ENCODE measurements at regions of chr10 and their contacts with region 1.

Region 1: DNA sequence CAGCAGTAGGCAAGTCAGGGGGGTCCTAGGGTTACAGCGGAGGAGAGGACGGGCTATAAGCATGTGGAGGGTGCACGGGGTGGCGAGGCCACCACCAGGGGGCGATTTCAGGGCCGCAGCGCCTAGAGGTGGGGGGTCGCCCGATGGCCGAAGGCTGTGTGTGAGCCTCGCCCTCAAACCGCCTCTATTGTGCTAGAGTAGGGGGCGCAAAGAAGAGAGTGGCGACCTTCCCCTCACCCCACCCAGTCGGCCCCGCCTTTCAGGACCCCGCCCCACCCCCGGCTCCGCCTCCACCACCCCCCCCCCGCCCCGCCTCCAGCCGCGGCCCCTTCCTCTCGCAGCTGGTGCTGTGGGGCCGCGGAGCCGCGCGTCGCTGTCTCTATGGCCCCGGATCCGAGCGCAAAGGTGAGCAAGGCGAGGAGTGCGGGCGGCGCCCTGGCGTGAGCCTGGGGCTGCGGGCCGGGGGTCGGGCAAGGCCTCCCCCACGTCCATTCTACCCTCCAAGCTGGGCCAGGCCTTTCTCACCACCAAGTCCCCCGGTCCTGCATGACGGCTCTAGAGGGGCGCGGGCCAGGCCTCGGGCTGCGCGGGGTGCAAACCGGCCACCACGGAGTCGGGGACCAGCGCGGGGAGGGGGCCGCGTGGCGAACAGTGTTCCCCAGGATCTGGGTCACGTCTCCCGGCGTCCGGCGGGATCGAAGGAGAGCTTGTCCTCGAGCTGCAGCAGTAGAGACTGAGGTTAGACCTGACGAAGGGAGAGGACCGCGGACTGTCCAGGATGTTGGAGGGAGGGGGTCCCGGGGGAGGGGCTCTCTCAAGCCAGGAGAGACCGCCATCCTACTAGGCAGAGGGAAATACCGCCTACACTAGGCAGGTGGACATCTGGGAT is at the start of gene SEMA4G:
- DNase-seq: peak; percentile 69 to 80
- H3K4me3 ChIP-seq: peak within 1 kb of the TSS; percentile 98
- H3K4me3 Mint-ChIP-seq: peak within 1 kb of the TSS; percentile 90
- H3K27ac Mint-ChIP-seq: peak within 1 kb of the TSS; percentile 86
- H3K4me1 ChIP-seq: peaks cover 33% of the 10 kb centered on the region
- H3K4me1 Mint-ChIP-seq: peaks cover 50% of the 10 kb centered on the region
- H3K27me3 ChIP-seq: no peaks in the 10 kb centered on the region
- H3K27me3 Mint-ChIP-seq: no peaks in the 10 kb centered on the region
- CTCF ChIP-seq: peak; percentile 80 to 83
- total RNA-seq, gene SEMA4G: 67.3 and 81.2 TPM in 2 replicates

Region 2: DNA sequence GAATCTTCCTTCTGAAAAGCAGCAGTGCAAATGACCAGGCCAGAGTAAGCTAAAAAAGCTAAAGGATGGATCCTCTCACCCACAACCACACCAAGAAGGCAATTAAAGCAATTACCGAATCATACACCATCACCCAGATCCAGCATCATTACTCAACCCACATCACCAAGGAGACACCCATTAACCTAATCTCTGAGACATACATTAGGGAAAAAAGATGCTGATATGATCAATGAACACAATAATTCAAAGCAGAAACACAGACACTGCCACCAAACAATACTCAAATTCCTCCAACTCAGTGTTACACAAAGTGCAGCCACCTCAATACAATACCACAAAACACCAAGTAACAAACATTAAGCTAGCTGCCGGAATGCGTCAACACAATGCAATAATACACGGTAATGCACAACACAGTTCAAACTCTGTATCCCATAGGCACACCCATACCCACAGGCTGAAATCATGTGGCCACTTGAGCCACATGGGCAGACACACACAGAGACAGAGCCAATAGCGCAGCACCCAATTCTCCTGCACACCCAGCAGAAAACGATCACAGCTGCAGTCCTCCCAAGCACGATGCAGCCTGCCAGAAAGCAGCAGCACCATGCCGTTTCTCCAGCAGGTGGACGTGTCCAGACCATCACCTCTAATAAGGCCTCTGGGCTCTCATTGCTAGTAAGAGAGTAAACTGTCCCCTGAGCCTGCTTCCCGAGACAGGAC is 202.6 kb before region 1 on chr10:
- CTCF ChIA-PET with region 1: no interaction called
- POLR2A ChIA-PET with region 1: no interaction called
- intact Hi-C with region 1: no loop called
- DNase-seq: peak in 1 of 2 experiments; percentile 53
- H3K4me3 ChIP-seq: no peak overlapping the region
- H3K4me3 Mint-ChIP-seq: no peak overlapping the region
- H3K27ac Mint-ChIP-seq: no peak overlapping the region
- H3K4me1 ChIP-seq: no peaks in the 10 kb centered on the region
- H3K4me1 Mint-ChIP-seq: no peaks in the 10 kb centered on the region
- H3K27me3 ChIP-seq: no peaks in the 10 kb centered on the region
- H3K27me3 Mint-ChIP-seq: peaks cover 23% of the 10 kb centered on the region
- CTCF ChIP-seq: peak; percentile 8 to 71

Region 3: DNA sequence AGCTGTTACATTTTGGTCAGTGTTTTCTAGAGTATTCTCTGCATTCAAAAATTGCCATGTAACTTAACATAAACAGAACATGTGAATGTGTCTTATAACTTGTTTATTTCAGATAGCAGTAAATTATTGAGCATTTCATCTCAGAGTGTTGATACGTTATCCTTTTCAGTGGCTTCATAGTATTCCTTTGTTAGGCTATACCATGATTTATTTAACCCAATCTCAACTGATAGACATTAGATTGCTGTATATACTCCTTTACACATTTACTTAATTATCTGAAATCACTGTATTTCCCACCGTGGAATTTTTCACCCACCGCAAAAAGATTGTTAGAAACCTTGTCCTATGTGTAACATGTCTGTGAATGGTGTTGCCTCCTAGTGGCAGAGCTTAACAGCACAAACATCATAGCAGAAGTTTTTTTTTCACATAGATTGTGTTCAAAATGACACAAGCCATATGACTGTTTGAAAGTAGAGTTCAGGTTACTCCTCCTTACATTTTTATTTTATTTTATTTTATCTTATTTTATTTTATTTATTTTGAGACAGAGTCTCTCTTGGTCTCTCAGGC is 35.3 kb before region 1 on chr10:
- CTCF ChIA-PET with region 1: no interaction called
- POLR2A ChIA-PET with region 1: no interaction called
- intact Hi-C with region 1: no loop called
- DNase-seq: no peak
- H3K4me3 ChIP-seq: no peak overlapping the region
- H3K4me3 Mint-ChIP-seq: no peak overlapping the region
- H3K27ac Mint-ChIP-seq: no peak overlapping the region
- H3K4me1 ChIP-seq: no peaks in the 10 kb centered on the region
- H3K4me1 Mint-ChIP-seq: no peaks in the 10 kb centered on the region
- H3K27me3 ChIP-seq: no peaks in the 10 kb centered on the region
- H3K27me3 Mint-ChIP-seq: no peaks in the 10 kb centered on the region
- CTCF ChIP-seq: peak; percentile 55 to 75

Region 4: DNA sequence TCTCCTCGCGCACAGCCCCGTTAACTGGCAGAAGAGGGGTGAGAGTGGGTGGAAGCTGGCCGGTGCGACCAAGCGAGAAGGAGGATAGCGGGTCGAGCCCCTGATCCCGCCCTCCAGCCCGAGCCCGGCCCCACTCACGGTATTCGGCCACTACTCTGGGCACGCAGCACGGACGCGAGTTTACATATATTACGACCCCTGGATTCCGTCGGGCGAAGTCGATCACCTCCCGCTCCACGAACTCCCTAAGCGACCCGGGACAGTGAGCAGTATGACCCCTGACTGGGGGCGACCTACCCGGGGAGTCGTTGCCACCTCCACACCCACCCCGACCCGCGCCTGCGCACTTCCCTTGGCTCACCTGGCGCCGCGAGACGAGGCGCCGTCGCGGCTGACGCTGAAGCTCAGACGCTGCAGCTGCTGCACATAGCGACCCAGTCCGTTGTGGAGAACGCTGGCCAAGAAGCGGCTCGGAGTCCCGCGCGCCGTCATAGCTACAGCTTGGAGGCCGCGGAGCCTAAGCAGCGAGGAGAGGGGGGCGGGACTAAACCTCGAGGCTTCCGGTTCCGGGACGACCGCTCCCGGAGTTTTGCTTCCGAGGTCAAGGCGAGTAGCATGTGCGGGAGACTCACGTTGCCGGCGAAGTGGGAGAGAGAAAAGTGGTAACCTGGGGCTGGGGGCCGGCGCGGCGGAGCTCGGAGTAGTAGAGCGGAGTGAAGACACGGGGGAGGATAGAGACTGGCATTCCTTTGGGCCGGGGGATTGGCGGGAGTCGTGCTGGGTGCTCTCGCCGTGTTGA is 17.7 kb after region 1 on chr10 and contains the starts of genes MRPL43 and TWNK:
- CTCF ChIA-PET with region 1: interaction called, 3 read pairs
- POLR2A ChIA-PET with region 1: no interaction called
- intact Hi-C with region 1: loop called (anchors 1 kb)
- DNase-seq: peak; percentile 86 to 87
- H3K4me3 ChIP-seq: peak within 1 kb of the TSS; percentile 44
- H3K4me3 Mint-ChIP-seq: peak within 1 kb of the TSS; percentile 100
- H3K27ac Mint-ChIP-seq: peak within 1 kb of the TSS; percentile 89
- H3K4me1 ChIP-seq: peaks cover 4% of the 10 kb centered on the region
- H3K4me1 Mint-ChIP-seq: peaks cover 10% of the 10 kb centered on the region
- H3K27me3 ChIP-seq: no peaks in the 10 kb centered on the region
- H3K27me3 Mint-ChIP-seq: no peaks in the 10 kb centered on the region
- CTCF ChIP-seq: no peak
- total RNA-seq, gene MRPL43: 82.1 and 84.1 TPM in 2 replicates
- total RNA-seq, gene TWNK: 26.2 and 29.8 TPM in 2 replicates

Region 5: DNA sequence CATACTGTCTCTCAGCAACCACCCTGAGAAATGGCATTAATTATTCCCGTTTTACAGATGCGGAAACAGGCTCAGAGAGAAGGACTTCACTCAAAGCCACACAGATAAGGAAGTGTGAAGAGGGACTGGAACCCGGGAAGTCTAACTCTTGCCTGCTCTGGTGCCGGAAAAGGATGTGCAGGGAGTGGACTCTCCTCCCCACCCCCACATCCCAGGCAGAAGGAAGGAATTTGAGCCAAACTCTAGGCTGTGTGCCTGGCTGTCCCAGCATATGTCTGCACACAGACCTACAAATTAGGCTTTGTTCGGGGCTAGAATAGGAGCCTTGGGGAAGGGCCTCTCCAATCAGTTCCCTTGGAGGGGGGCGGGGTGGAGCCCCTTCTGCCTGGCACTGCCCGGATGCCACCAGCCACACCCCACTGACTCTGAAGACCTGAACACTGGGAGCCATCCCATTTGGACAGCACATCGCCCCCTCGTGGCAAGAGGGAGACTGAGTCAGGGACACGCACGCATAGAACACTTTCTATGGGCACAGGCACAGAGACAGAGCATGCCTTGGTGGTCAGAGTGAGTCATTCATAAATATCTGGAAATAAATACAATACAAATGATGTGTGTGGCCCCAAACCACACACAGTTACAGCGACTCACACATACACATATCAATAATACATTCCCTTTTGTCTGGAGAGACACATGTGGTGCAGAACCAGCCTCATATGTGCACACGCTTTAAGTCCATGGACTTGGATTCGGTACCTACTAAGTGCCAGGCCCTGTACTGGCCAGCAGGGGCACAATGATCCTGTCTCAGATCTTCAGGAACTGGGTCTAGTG is 43.3 kb after region 1 on chr10:
- CTCF ChIA-PET with region 1: interaction called, 7 read pairs
- POLR2A ChIA-PET with region 1: interaction called, 3 read pairs
- intact Hi-C with region 1: loop called (anchors 1 kb)
- DNase-seq: peak; percentile 84 to 85
- H3K4me3 ChIP-seq: no peak overlapping the region
- H3K4me3 Mint-ChIP-seq: no peak overlapping the region
- H3K27ac Mint-ChIP-seq: peak overlapping the region; percentile 2
- H3K4me1 ChIP-seq: no peaks in the 10 kb centered on the region
- H3K4me1 Mint-ChIP-seq: peaks cover 15% of the 10 kb centered on the region
- H3K27me3 ChIP-seq: no peaks in the 10 kb centered on the region
- H3K27me3 Mint-ChIP-seq: no peaks in the 10 kb centered on the region
- CTCF ChIP-seq: peak; percentile 72 to 84

Region 6: GRCh38 chr10:101284116-101284743 is 314.8 kb after region 1 on chr10:
- CTCF ChIA-PET with region 1: no interaction called
- POLR2A ChIA-PET with region 1: no interaction called
- intact Hi-C with region 1: no loop called
- DNase-seq: no peak
- H3K4me3 ChIP-seq: no peak overlapping the region
- H3K4me3 Mint-ChIP-seq: no peak overlapping the region
- H3K27ac Mint-ChIP-seq: no peak overlapping the region
- H3K4me1 ChIP-seq: no peaks in the 10 kb centered on the region
- H3K4me1 Mint-ChIP-seq: no peaks in the 10 kb centered on the region
- H3K27me3 ChIP-seq: no peaks in the 10 kb centered on the region
- H3K27me3 Mint-ChIP-seq: no peaks in the 10 kb centered on the region
- CTCF ChIP-seq: no peak

Measured in Caco-2 (cell line).